Vagina (tissue), 2 donors: ENCODE measurements at regions of chr10 and their contacts with region 1.

Region 1: GRCh38 chr10:86688398-86688921 is 20.1 kb downstream of the LDB3 start:
- DNase-seq: no peak
- H3K4me3 ChIP-seq: no peak overlapping the region
- H3K27ac ChIP-seq: no peak overlapping the region
- H3K4me1 ChIP-seq: peaks cover 6% of the 10 kb centered on the region
- H3K27me3 ChIP-seq: no peaks in the 10 kb centered on the region
- CTCF ChIP-seq: peak; percentile 47 to 76 (median 56)
- POLR2A ChIP-seq: no peak

Region 2: GRCh38 chr10:86941977-86942442 is 253.6 kb after region 1 on chr10:
- intact Hi-C with region 1: loop called (anchors 1 kb)
- DNase-seq: peak in 1 of 2 donors; percentile 83
- H3K4me3 ChIP-seq: no peak overlapping the region
- H3K27ac ChIP-seq: no peak overlapping the region
- H3K4me1 ChIP-seq: peaks cover 20% of the 10 kb centered on the region
- H3K27me3 ChIP-seq: no peaks in the 10 kb centered on the region
- CTCF ChIP-seq: no peak
- POLR2A ChIP-seq: no peak